ENCODE measurements at regions of chr1 and their contacts with region 1.

Region 1: GRCh38 chr1:227762233-227762911 is 27.1 kb downstream of the SNAP47 start:
- DNase-seq: peak; percentile 79 to 98
- ATAC-seq: peak; percentile 86 to 95
- H3K4me3 ChIP-seq: no peak overlapping the region
- H3K27ac ChIP-seq: peak overlapping the region; percentile 62 to 74; a peak in 3 of 6 replicates
- H3K4me1 ChIP-seq: peaks cover 34% of the 10 kb centered on the region
- CTCF ChIP-seq: peak; percentile 89
- EP300 ChIP-seq: no peak
- POLR2A ChIP-seq: no peak
- RAD21 ChIP-seq: peak; percentile 91 to 94

Region 2: GRCh38 chr1:227929751-227930472 is 167.5 kb after region 1 on chr1:
- CTCF ChIA-PET with region 1: interaction called, 12 read pairs
- POLR2A ChIA-PET with region 1: no interaction called
- DNase-seq: peak in 1 of 2 experiments; percentile 50
- ATAC-seq: no peak
- H3K4me3 ChIP-seq: no peak overlapping the region
- H3K27ac ChIP-seq: no peak overlapping the region
- H3K4me1 ChIP-seq: no peaks in the 10 kb centered on the region; the same call in 2 of the 3 replicates
- CTCF ChIP-seq: no peak
- EP300 ChIP-seq: no peak
- POLR2A ChIP-seq: no peak
- RAD21 ChIP-seq: no peak

Region 3: GRCh38 chr1:228282646-228283371 is 520.4 kb after region 1 on chr1:
- CTCF ChIA-PET with region 1: no interaction called
- POLR2A ChIA-PET with region 1: no interaction called
- DNase-seq: no peak
- ATAC-seq: no peak
- H3K4me3 ChIP-seq: no peak overlapping the region
- H3K27ac ChIP-seq: no peak overlapping the region
- H3K4me1 ChIP-seq: no peaks in the 10 kb centered on the region
- CTCF ChIP-seq: no peak
- EP300 ChIP-seq: no peak
- POLR2A ChIP-seq: no peak
- RAD21 ChIP-seq: no peak

Measured in A549 (cell line).